PC-3 (cell line): ENCODE measurements at regions of chr18 and their contacts with region 1.

Region 1: GRCh38 chr18:3281456-3282400 is 19.8 kb downstream of the MYL12B start:
- DNase-seq: peak; percentile 96
- ATAC-seq: peak; percentile 64
- H3K4me3 ChIP-seq: no peak overlapping the region
- H3K27ac ChIP-seq: no peak overlapping the region
- H3K4me1 ChIP-seq: peaks cover 27% of the 10 kb centered on the region
- H3K27me3 ChIP-seq: no peaks in the 10 kb centered on the region
- CTCF ChIP-seq: peak; percentile 87

Region 2: GRCh38 chr18:3321133-3321812 is 39.5 kb after region 1 on chr18:
- CTCF ChIA-PET with region 1: no interaction called
- POLR2A ChIA-PET with region 1: no interaction called
- intact Hi-C with region 1: loop called (anchors 2 kb)
- DNase-seq: peak; percentile 97
- ATAC-seq: peak; percentile 68
- H3K4me3 ChIP-seq: no peak overlapping the region
- H3K27ac ChIP-seq: peak overlapping the region; percentile 69
- H3K4me1 ChIP-seq: peaks cover 36% of the 10 kb centered on the region
- H3K27me3 ChIP-seq: no peaks in the 10 kb centered on the region
- CTCF ChIP-seq: no peak

Region 3: DNA sequence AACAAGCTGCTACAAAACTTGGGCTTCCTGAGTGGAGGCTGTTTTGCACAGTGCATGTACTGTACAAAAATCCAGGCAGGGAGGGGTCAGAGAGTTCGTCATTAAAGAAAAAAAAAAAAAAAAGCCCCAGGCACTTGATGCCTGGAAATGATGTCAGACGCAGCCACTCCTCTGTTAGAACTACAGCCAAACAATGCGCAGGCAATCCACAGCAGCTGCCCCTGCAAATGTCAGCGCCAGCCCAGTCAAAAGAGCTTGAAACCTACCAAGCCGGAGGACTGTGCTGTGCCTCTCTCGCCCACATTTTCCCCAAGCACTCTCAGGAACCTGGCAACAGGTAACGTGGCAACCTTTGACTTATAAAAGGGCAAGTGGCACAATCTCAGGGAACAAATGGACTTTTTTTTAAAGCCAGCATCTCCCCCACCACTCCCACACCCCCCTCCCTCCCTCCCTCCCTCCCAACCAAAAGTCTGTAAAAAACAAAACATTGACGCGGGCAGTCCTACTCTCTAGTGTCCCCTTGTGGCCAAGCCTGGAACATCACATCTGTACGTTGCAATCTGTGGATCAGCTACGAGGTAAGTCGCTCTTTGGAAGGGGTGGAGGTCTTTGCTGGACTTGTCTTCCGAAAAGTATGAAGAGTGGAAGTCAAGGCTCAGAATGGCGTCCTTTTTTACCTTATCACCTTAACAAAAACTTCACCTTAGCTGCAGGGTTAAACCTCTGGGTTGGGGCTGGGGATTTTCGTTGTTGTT is 312.4 kb after region 1 on chr18:
- CTCF ChIA-PET with region 1: interaction called, 3 read pairs
- POLR2A ChIA-PET with region 1: no interaction called
- intact Hi-C with region 1: loop called (anchors 1 kb)
- DNase-seq: peak; percentile 94
- ATAC-seq: peak; percentile 50
- H3K4me3 ChIP-seq: peak overlapping the region; percentile 60
- H3K27ac ChIP-seq: peak overlapping the region; percentile 99
- H3K4me1 ChIP-seq: peaks cover 45% of the 10 kb centered on the region
- H3K27me3 ChIP-seq: no peaks in the 10 kb centered on the region
- CTCF ChIP-seq: peak; percentile 81

Region 4: DNA sequence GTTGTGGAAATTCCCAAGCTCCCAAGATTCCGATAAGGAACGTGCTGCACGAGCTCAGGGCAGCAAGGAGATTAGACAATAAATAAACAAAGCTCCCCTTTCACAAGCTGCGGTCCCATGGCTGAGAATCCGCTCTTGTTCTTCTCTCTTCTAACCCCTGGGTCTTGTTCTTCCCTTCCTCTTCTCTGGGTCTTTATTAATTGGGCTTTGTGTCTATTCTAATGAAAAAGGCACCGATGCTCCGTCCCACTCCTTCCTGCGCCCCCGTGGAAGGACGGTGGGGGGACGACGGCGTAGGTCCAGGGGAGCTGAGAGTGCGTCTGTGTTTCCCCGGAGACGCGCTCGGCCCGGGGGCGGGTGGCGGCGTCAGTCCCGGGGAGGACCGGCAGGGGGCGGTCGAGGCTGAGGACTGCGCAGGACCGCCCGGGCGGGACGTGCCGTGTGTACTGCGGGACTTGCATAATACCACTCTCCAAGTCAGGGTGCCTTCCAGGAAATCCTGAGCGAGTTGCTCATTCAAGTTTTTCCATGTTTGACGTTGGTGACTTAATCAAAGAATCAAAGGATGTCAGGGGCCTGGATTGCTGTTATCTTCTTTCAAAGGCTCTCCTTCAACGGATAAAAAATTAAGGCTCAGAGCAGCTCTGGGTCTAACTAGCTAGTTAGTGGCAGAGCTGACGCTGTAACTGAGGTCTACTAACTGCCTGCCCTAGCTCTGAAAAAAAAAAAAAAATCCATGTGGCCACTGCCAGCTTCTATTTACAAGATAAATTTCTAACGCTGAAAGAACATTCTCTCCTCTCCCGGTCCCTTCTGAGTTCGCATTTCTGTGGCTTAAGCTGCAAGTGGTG is 489.6 kb after region 1 on chr18:
- CTCF ChIA-PET with region 1: no interaction called
- POLR2A ChIA-PET with region 1: no interaction called
- intact Hi-C with region 1: loop called (anchors 5 kb)
- DNase-seq: peak; percentile 80
- ATAC-seq: peak; percentile 95
- H3K4me3 ChIP-seq: peak overlapping the region; percentile 49
- H3K27ac ChIP-seq: no peak overlapping the region
- H3K4me1 ChIP-seq: peaks cover 21% of the 10 kb centered on the region
- H3K27me3 ChIP-seq: peaks cover 27% of the 10 kb centered on the region; the same call in 1 of the 2 replicates
- CTCF ChIP-seq: peak; percentile 88